Adrenal gland (tissue), 19 donors: ENCODE measurements at regions of chr7 and their contacts with region 1.

Region 1: GRCh38 chr7:104160375-104160774 is 47.4 kb downstream of the ORC5 start:
- DNase-seq: no peak
- H3K4me3 ChIP-seq: no peak overlapping the region
- H3K27ac ChIP-seq: no peak overlapping the region
- H3K4me1 ChIP-seq: no peaks in the 10 kb centered on the region
- H3K27me3 ChIP-seq: no peaks in the 10 kb centered on the region
- CTCF ChIP-seq: peak; percentile 11 to 55 (median 40)
- POLR2A ChIP-seq: no peak

Region 2: GRCh38 chr7:103573479-103574058 is 586.8 kb before region 1 on chr7:
- intact Hi-C with region 1: loop called in 1 of 2 experiments (anchors 5 kb)
- DNase-seq: no peak
- H3K4me3 ChIP-seq: no peak overlapping the region
- H3K27ac ChIP-seq: no peak overlapping the region
- H3K4me1 ChIP-seq: no peaks in the 10 kb centered on the region
- H3K27me3 ChIP-seq: peaks cover 4% of the 10 kb centered on the region
- CTCF ChIP-seq: peak; percentile 55 to 74 (median 68)
- POLR2A ChIP-seq: no peak

Region 3: GRCh38 chr7:104931181-104931781 is 770.9 kb after region 1 on chr7:
- intact Hi-C with region 1: no loop called
- DNase-seq: no peak
- H3K4me3 ChIP-seq: no peak overlapping the region
- H3K27ac ChIP-seq: no peak overlapping the region
- H3K4me1 ChIP-seq: no peaks in the 10 kb centered on the region
- H3K27me3 ChIP-seq: no peaks in the 10 kb centered on the region
- CTCF ChIP-seq: no peak
- POLR2A ChIP-seq: no peak